Mammary epithelial cell (primary cell): ENCODE measurements at regions of chr9 and their contacts with region 1.

Region 1: DNA sequence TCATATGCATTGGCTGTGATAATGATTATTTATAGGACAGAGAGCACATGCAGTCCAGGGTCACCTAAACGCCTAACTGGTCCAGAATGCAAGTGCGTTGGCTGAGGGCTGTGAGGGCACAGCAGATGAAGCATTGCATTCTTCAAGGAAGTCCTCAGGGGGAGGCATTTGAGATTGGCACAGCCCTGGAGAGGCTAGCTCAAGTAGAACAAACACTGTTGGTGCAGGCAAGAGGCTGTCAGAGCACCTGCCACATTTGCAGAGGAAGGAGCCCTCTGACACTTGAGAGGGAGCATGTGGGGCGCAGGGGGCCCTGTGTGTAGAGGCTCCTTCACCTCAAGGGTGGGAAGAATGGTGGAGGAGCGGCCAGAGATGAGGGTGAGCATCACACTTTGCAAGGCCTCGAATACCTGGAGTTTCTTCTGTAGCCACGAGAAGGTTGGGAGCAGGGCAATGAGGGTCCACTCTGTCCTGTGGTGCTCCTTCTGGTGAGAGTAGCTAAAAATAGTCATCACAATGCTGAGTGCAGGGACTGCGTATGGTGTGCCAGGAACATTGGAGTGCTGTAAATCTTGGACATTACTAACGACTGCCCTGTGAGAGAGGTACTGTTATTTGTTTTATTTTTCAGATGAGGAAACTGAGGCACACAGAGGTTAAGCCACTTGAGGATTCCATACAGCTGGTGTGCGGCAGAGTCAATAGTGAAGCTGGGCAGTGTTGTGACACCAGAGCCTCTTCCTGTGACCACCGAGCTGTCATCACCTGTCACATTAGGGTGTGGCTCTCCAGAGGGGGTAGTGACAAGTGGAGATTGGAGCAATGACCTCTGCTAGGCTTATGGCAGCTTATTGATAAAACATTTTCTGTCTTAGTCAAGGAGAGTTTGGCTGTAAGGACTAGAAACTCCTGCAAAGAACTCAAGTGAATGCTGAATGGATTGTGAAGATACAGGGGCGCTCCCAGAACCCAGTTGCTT is 100.2 kb downstream of the PIP5K1B start:
- DNase-seq: no peak
- H3K4me3 ChIP-seq: no peak overlapping the region
- H3K27ac ChIP-seq: no peak overlapping the region
- H3K4me1 ChIP-seq: peaks cover 5% of the 10 kb centered on the region
- H3K27me3 ChIP-seq: no peaks in the 10 kb centered on the region
- CTCF ChIP-seq: no peak

Region 2: DNA sequence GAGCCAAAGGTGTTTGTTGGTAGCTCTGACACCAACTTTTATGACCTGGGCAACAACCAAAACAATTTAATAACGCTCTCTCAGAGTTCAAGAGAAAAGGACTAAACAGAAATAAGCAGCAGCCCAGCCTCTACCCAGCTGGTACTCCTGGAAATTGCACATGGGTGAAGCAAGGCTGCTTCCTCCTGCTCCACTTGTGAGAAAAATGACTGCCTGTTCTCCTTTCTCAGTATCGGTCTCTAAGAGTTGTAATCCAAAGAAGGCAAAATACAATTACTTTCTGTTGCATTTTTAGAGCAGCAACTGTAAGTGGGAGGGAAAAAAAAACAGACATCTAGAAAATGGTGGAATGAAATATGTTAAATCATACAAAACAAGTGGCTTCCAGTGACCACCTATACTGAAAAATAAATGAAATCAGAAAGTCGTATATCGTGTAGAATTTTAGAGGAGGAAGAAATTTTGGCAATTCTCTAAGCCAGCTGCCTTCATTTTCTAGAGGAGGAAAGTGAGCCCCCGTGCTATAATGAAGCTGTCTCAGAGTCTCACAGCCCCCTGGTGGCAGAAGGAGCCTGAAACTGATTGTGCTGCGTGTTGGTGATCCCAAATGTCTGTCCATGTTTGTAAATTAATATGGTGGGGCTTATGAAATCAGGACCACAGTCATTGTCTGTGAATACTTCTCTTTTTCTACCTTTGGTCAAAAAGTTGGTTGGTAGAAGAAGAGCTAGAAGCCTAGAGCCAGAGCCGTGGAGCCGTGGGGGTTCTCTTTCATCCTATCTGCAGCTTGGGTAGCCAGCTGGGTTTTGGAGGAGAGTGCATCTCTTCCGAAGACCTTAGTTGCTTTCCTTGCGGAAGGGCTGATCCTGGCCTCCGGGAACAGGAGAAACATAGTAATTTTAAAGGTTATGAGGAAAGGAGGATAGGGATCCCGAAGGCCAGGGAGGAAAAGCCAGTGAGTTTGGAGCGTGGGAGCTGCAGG is 39.7 kb after region 1 on chr9:
- CTCF ChIA-PET with region 1: no interaction called
- dilution Hi-C with region 1: loop called (anchors 5 kb)
- in situ Hi-C with region 1: no loop called
- intact Hi-C with region 1: no loop called
- DNase-seq: no peak
- H3K4me3 ChIP-seq: no peak overlapping the region
- H3K27ac ChIP-seq: no peak overlapping the region
- H3K4me1 ChIP-seq: no peaks in the 10 kb centered on the region
- H3K27me3 ChIP-seq: no peaks in the 10 kb centered on the region
- CTCF ChIP-seq: peak; percentile 21 to 29

Region 3: GRCh38 chr9:68872026-68872501 is 66.9 kb after region 1 on chr9:
- CTCF ChIA-PET with region 1: no interaction called
- dilution Hi-C with region 1: loop called (anchors 5 kb)
- in situ Hi-C with region 1: no loop called
- intact Hi-C with region 1: no loop called
- DNase-seq: no peak
- H3K4me3 ChIP-seq: no peak overlapping the region
- H3K27ac ChIP-seq: no peak overlapping the region
- H3K4me1 ChIP-seq: no peaks in the 10 kb centered on the region
- H3K27me3 ChIP-seq: no peaks in the 10 kb centered on the region
- CTCF ChIP-seq: no peak

Region 4: DNA sequence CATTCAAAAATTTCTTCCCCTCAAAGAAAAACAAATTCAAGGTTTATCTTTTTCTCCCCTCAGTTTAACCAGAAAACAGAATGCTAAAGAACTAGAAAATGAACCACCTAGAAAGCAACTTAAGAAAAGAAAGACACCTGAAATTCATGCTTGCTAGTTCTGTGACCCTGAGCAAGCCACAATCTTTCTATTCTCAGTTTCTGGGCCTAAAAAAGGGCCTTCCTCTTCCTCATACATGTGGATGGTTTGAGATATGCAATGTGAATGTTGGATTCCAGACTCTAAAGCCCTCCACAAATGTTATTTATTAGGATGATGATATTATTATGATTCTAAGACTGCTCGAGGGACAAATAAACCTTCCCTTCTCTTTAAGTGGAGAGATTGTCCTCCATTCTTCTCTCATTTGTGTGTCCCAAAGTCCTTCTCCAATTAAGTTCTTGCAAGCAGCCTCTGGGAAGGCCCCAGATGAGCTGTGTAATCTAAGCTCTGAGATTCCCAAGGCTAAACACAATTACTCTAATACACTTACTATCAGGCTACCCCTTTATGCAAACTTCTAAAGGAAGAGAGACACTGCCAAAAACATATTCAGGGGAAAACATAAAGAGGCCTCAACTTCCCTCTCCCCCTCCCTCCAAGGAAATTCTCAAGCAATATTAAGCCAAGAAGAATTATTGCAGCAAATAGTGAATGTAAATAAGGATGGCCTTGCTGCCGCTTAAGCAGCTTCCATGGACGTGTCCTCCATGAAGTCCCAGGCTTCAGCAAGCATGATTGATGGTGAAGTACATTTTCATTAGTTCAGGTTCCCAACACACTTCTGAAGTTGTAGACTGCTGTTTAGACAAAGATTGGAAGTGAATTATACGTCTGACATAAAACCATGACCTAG is 128.5 kb after region 1 on chr9:
- CTCF ChIA-PET with region 1: no interaction called
- dilution Hi-C with region 1: no loop called
- in situ Hi-C with region 1: no loop called
- intact Hi-C with region 1: no loop called
- DNase-seq: no peak
- H3K4me3 ChIP-seq: no peak overlapping the region
- H3K27ac ChIP-seq: no peak overlapping the region
- H3K4me1 ChIP-seq: no peaks in the 10 kb centered on the region
- H3K27me3 ChIP-seq: peaks cover 2% of the 10 kb centered on the region
- CTCF ChIP-seq: no peak